SK-N-SH (cell line): ENCODE measurements at regions of chr14 and their contacts with region 1.

Region 1: GRCh38 chr14:105045710-105046326 is 19.4 kb downstream of the GPR132 start:
- DNase-seq: peak; percentile 97
- H3K4me3 ChIP-seq: peak overlapping the region in 1 of 2 experiments; percentile 50; a peak in 1 of 4 replicates
- H3K27ac ChIP-seq: no peak overlapping the region
- H3K4me1 ChIP-seq: peaks cover 0 to 5% of the 10 kb centered on the region in 2 experiments; a peak in 1 of 4 replicates
- H3K27me3 ChIP-seq: no peaks in the 10 kb centered on the region
- CTCF ChIP-seq: peak; percentile 99
- EP300 ChIP-seq: no peak
- RAD21 ChIP-seq: peak; percentile 98

Region 2: GRCh38 chr14:104665657-104666522 is 379.9 kb before region 1 on chr14:
- CTCF ChIA-PET with region 1: no interaction called
- POLR2A ChIA-PET with region 1: no interaction called
- DNase-seq: no peak
- H3K4me3 ChIP-seq: no peak overlapping the region
- H3K27ac ChIP-seq: no peak overlapping the region
- H3K4me1 ChIP-seq: no peaks in the 10 kb centered on the region; a peak in 1 of 4 replicates
- H3K27me3 ChIP-seq: no peaks in the 10 kb centered on the region
- CTCF ChIP-seq: 0 out of 2 replicates have a peak, but pooled peaks have one; percentile 25
- EP300 ChIP-seq: no peak
- RAD21 ChIP-seq: no peak

Region 3: DNA sequence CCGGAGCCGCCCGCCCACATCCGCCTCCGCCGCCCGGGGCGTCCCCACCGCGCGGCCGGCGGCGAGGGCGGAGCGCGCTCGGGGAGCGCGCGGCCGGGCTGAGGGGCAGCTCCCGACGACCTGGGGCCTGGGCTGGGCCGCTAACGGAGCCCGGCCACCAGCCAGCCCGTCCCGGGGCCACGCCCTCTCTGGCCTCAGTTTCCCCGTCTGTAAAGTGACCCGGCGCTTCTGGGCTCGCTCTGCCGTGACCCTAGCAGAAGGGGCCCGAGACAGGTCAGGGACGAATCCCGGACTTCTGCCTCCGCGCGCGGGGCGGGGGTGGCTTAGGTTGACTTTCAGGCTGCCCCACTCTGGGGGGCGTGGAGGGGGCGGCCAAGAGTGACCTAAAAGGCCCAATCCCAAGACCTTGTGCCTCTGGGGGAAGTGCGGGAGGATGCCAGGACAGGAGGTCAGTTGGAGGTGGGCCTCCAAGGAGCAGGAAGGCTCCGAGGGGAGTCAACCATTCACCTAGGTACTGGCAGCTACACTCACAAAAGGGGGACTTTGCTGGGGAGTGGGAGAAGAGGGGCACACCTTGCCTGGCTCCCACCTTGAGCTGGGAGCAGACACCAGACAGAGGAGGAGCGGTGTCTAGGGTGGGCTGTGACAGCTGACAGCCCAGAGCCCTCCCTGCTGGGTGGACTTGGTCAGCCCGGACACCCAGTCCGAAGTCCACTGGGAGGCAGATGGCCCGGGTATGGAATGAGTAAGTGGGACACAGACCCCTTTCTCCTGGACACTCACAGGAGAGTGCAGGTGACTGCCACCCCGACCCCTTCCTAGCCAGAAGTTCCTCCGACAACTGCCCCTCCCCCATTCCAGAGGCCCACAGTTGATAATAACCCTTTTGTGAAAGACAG is 249.8 kb before region 1 on chr14:
- CTCF ChIA-PET with region 1: no interaction called
- POLR2A ChIA-PET with region 1: no interaction called
- DNase-seq: peak; percentile 94
- H3K4me3 ChIP-seq: peak overlapping the region; percentile 55 to 79
- H3K27ac ChIP-seq: peak overlapping the region in 1 of 2 experiments; percentile 67; a peak in 1 of 4 replicates
- H3K4me1 ChIP-seq: peaks cover 8 to 48% of the 10 kb centered on the region in 2 experiments; a peak in 3 of 4 replicates
- H3K27me3 ChIP-seq: no peaks in the 10 kb centered on the region
- CTCF ChIP-seq: no peak
- EP300 ChIP-seq: no peak
- RAD21 ChIP-seq: no peak

Region 4: DNA sequence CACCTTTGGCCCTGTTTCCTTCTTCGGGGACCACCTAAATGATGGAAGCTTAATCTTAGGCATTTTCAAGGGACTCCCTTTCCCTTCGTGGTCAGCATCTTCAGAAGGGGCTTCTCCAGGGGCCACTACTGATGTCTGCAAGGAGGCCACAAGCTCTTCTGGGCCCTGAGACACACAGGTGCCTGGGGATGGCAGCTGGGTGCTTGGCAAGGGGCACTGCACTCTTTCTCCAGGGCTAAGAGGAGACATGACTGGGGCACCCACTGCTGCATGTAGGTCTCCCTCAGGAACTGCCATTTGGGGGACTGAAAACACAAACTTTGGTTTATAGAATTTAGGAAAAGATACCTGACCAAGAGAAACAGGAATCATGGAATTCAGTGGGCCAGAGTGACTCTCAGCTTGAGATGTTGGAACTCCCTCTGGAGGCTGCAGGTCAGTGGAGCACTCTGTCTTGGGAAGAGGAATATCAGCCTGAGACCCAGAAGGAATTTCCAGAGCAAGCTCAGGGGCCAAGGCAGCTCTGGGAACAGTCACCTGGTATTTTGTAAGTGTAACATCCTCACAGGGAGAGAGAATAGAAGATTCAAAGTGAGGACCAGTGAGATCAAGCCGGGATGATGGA is 105.2 kb before region 1 on chr14:
- CTCF ChIA-PET with region 1: interaction called, 20 read pairs
- POLR2A ChIA-PET with region 1: no interaction called
- DNase-seq: no peak
- H3K4me3 ChIP-seq: no peak overlapping the region
- H3K27ac ChIP-seq: no peak overlapping the region
- H3K4me1 ChIP-seq: no peaks in the 10 kb centered on the region
- H3K27me3 ChIP-seq: no peaks in the 10 kb centered on the region
- CTCF ChIP-seq: no peak
- EP300 ChIP-seq: no peak
- RAD21 ChIP-seq: peak; percentile 8; the same call in 1 of the 2 replicates

Region 5: DNA sequence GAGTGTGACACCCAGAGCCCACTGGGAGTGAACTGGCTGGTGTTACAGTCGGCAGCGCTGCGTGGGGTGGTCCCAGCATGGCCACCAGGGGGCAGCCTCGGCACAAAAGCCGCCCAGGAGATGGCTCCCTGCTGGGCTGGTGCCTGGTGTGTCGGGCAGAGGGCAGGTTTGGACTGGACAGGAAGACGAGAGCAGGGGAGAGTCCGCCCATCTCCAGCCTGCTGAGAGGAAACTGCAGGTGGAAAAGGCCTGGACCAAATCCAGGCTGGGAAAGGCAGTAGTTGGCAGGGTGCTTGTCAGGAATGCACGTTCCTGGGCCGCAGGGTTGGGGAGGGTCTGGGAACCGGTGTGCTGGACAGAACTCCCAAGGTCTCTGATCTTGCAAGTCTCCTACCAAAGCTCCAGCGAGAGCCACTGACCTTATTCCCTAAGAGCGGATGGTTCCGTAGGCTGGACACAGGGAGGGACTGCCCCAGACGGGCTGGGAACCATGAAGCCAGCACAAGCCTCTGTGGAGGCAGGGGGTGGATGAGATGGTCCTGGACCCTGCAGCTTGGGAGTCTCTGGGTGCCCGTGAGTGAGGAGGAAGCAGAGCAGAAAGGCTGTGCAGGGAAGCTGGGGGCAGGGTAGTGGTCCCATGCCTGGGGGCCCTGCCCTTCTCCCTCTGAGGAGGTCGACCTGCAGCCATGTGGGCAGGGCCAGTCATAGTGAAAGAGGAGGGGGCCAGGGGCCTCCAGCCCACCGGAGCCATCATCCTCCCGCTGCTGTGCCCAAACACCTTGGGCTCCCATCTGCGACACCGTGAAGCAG is 69.4 kb before region 1 on chr14:
- CTCF ChIA-PET with region 1: interaction called, 284 read pairs
- POLR2A ChIA-PET with region 1: interaction called, 3 read pairs
- DNase-seq: peak; percentile 92
- H3K4me3 ChIP-seq: peak overlapping the region; percentile 71 to 81
- H3K27ac ChIP-seq: no peak overlapping the region
- H3K4me1 ChIP-seq: peaks cover 41 to 68% of the 10 kb centered on the region in 2 experiments; a peak in 3 of 4 replicates
- H3K27me3 ChIP-seq: no peaks in the 10 kb centered on the region
- CTCF ChIP-seq: peak; percentile 80
- EP300 ChIP-seq: no peak
- RAD21 ChIP-seq: peak; percentile 92

Region 6: GRCh38 chr14:105020815-105021655 is 24.8 kb before region 1 on chr14 and contains the start of gene CDCA4:
- CTCF ChIA-PET with region 1: interaction called, 138 read pairs
- POLR2A ChIA-PET with region 1: no interaction called
- DNase-seq: peak; percentile 100
- H3K4me3 ChIP-seq: peak within 1 kb of the TSS; percentile 75 to 77
- H3K27ac ChIP-seq: peak within 1 kb of the TSS; percentile 89 to 99
- H3K4me1 ChIP-seq: peaks cover 22 to 51% of the 10 kb centered on the region in 2 experiments; a peak in 2 of 4 replicates
- H3K27me3 ChIP-seq: no peaks in the 10 kb centered on the region
- CTCF ChIP-seq: no peak
- EP300 ChIP-seq: 0 out of 4 replicates have a peak, but pooled peaks of 1 of the 2 experiments have one; percentile 7
- RAD21 ChIP-seq: no peak
- polyA plus RNA-seq, gene CDCA4: 23.7 and 26.8 TPM in 2 replicates

Region 7: GRCh38 chr14:105065280-105066228 is 19.7 kb after region 1 on chr14 and contains the start of gene GPR132:
- CTCF ChIA-PET with region 1: interaction called, 81 read pairs
- POLR2A ChIA-PET with region 1: no interaction called
- DNase-seq: no peak
- H3K4me3 ChIP-seq: no peak within 1 kb of the TSS
- H3K27ac ChIP-seq: no peak within 1 kb of the TSS
- H3K4me1 ChIP-seq: no peaks in the 10 kb centered on the region; a peak in 1 of 4 replicates
- H3K27me3 ChIP-seq: no peaks in the 10 kb centered on the region
- CTCF ChIP-seq: no peak
- EP300 ChIP-seq: no peak
- RAD21 ChIP-seq: no peak
- polyA plus RNA-seq, gene GPR132: 0.03 TPM in 1 of 2 replicates, not detected in the other